ENCODE measurements at regions of chr5 and their contacts with region 1.

Region 1: GRCh38 chr5:10479226-10479721 is 37.6 kb downstream of the ROPN1L start:
- DNase-seq: peak; percentile 97 to 98
- H3K4me3 ChIP-seq: peak overlapping the region; percentile 12; the same call in 1 of the 2 replicates
- H3K27ac ChIP-seq: peak overlapping the region; percentile 79
- H3K4me1 ChIP-seq: peaks cover 50% of the 10 kb centered on the region
- H3K27me3 ChIP-seq: no peaks in the 10 kb centered on the region
- CTCF ChIP-seq: no peak

Region 2: GRCh38 chr5:10157085-10157669 is 322.1 kb before region 1 on chr5:
- CTCF ChIA-PET with region 1: no interaction called
- POLR2A ChIA-PET with region 1: no interaction called
- intact Hi-C with region 1: no loop called
- DNase-seq: no peak
- H3K4me3 ChIP-seq: no peak overlapping the region
- H3K27ac ChIP-seq: no peak overlapping the region
- H3K4me1 ChIP-seq: no peaks in the 10 kb centered on the region
- H3K27me3 ChIP-seq: 0 out of 2 replicates have a peak, but pooled peaks cover 7% of the 10 kb centered on the region
- CTCF ChIP-seq: no peak

Region 3: GRCh38 chr5:10353241-10354047 is 125.8 kb before region 1 on chr5 and contains the start of gene MARCHF6:
- CTCF ChIA-PET with region 1: no interaction called
- POLR2A ChIA-PET with region 1: no interaction called
- intact Hi-C with region 1: loop called (anchors 1 kb)
- DNase-seq: peak; percentile 87 to 100
- H3K4me3 ChIP-seq: peak within 1 kb of the TSS; percentile 85
- H3K27ac ChIP-seq: peak within 1 kb of the TSS; percentile 93
- H3K4me1 ChIP-seq: peaks cover 18% of the 10 kb centered on the region
- H3K27me3 ChIP-seq: no peaks in the 10 kb centered on the region
- CTCF ChIP-seq: no peak
- total RNA-seq, gene MARCHF6: 283 and 364 TPM in 2 replicates

Region 4: GRCh38 chr5:10513501-10514442 is 34.5 kb after region 1 on chr5:
- CTCF ChIA-PET with region 1: interaction called, 4 read pairs
- POLR2A ChIA-PET with region 1: interaction called, 7 read pairs
- intact Hi-C with region 1: loop called (anchors 2 kb)
- DNase-seq: peak; percentile 75 to 95
- H3K4me3 ChIP-seq: no peak overlapping the region
- H3K27ac ChIP-seq: peak overlapping the region; percentile 91
- H3K4me1 ChIP-seq: peaks cover 56% of the 10 kb centered on the region
- H3K27me3 ChIP-seq: no peaks in the 10 kb centered on the region
- CTCF ChIP-seq: no peak

Region 5: DNA sequence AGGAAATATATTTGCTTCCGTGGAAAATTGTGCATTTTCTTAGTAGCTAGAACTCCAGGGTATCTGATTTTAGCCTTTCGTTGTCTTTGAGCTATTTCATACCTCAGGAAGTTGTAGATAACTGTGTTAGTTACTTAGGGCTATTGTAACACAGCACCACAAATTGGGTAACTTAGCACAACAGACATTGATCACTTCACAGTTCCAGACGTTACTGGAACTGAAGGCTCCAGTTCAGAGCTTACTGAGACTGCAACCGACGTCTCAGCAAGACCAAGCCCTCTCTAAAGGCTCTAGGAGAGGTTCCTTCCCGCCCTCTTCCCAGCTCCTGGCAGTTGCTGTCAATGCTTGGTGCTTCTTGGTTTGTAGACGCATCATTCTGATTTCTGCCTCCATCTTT is 66.9 kb after region 1 on chr5:
- CTCF ChIA-PET with region 1: interaction called, 4 read pairs
- POLR2A ChIA-PET with region 1: interaction called, 22 read pairs
- intact Hi-C with region 1: loop called (anchors 1 kb)
- DNase-seq: no peak
- H3K4me3 ChIP-seq: no peak overlapping the region
- H3K27ac ChIP-seq: no peak overlapping the region
- H3K4me1 ChIP-seq: peaks cover 14% of the 10 kb centered on the region
- H3K27me3 ChIP-seq: no peaks in the 10 kb centered on the region
- CTCF ChIP-seq: no peak

Region 6: GRCh38 chr5:10627160-10627701 is 148.0 kb after region 1 on chr5:
- CTCF ChIA-PET with region 1: interaction called, 3 read pairs
- POLR2A ChIA-PET with region 1: no interaction called
- intact Hi-C with region 1: loop called (anchors 1 kb)
- DNase-seq: no peak
- H3K4me3 ChIP-seq: no peak overlapping the region
- H3K27ac ChIP-seq: peak overlapping the region; percentile 5; the same call in 1 of the 2 replicates
- H3K4me1 ChIP-seq: peaks cover 7% of the 10 kb centered on the region; the same call in 1 of the 2 replicates
- H3K27me3 ChIP-seq: no peaks in the 10 kb centered on the region
- CTCF ChIP-seq: no peak